HCT116 (cell line): ENCODE measurements at regions of chr3 and their contacts with region 1.

Region 1: GRCh38 chr3:68363821-68364220 is 568.5 kb downstream of the TAFA4 start:
- DNase-seq: no peak
- ATAC-seq: no peak
- H3K4me3 ChIP-seq: no peak overlapping the region
- H3K27ac ChIP-seq: no peak overlapping the region
- H3K4me1 ChIP-seq: no peaks in the 10 kb centered on the region
- H3K27me3 ChIP-seq: no peaks in the 10 kb centered on the region
- CTCF ChIP-seq: no peak
- POLR2A ChIP-seq: no peak
- RAD21 ChIP-seq: no peak

Region 2: GRCh38 chr3:68403741-68404140 is 39.9 kb after region 1 on chr3:
- CTCF ChIA-PET with region 1: no interaction called
- POLR2A ChIA-PET with region 1: no interaction called
- RAD21 ChIA-PET with region 1: no interaction called
- intact Hi-C with region 1: loop called (anchors 5 kb)
- DNase-seq: no peak
- ATAC-seq: no peak
- H3K4me3 ChIP-seq: no peak overlapping the region
- H3K27ac ChIP-seq: no peak overlapping the region
- H3K4me1 ChIP-seq: no peaks in the 10 kb centered on the region
- H3K27me3 ChIP-seq: no peaks in the 10 kb centered on the region
- CTCF ChIP-seq: no peak
- POLR2A ChIP-seq: no peak
- RAD21 ChIP-seq: no peak

Region 3: GRCh38 chr3:68699541-68699940 is 335.7 kb after region 1 on chr3:
- CTCF ChIA-PET with region 1: no interaction called
- POLR2A ChIA-PET with region 1: no interaction called
- RAD21 ChIA-PET with region 1: no interaction called
- intact Hi-C with region 1: no loop called
- DNase-seq: no peak
- ATAC-seq: no peak
- H3K4me3 ChIP-seq: no peak overlapping the region
- H3K27ac ChIP-seq: no peak overlapping the region
- H3K4me1 ChIP-seq: no peaks in the 10 kb centered on the region
- H3K27me3 ChIP-seq: no peaks in the 10 kb centered on the region
- CTCF ChIP-seq: no peak
- POLR2A ChIP-seq: no peak
- RAD21 ChIP-seq: no peak

Region 4: GRCh38 chr3:69594286-69594685 is 1230.5 kb after region 1 on chr3:
- CTCF ChIA-PET with region 1: no interaction called
- POLR2A ChIA-PET with region 1: no interaction called
- RAD21 ChIA-PET with region 1: no interaction called
- intact Hi-C with region 1: no loop called
- DNase-seq: no peak
- ATAC-seq: no peak
- H3K4me3 ChIP-seq: no peak overlapping the region
- H3K27ac ChIP-seq: no peak overlapping the region
- H3K4me1 ChIP-seq: no peaks in the 10 kb centered on the region
- H3K27me3 ChIP-seq: no peaks in the 10 kb centered on the region; the same call in 1 of the 2 replicates
- CTCF ChIP-seq: no peak
- POLR2A ChIP-seq: no peak
- RAD21 ChIP-seq: no peak